Activated CD8-positive, alpha-beta memory T cell treated with anti-CD3 and anti-CD28 coated beads, Interleukin-2, amount 10 ng/mL, durations not matched to agents 7 days and 5 days (primary cell): ENCODE measurements at regions of chr4 and their contacts with region 1.

Region 1: DNA sequence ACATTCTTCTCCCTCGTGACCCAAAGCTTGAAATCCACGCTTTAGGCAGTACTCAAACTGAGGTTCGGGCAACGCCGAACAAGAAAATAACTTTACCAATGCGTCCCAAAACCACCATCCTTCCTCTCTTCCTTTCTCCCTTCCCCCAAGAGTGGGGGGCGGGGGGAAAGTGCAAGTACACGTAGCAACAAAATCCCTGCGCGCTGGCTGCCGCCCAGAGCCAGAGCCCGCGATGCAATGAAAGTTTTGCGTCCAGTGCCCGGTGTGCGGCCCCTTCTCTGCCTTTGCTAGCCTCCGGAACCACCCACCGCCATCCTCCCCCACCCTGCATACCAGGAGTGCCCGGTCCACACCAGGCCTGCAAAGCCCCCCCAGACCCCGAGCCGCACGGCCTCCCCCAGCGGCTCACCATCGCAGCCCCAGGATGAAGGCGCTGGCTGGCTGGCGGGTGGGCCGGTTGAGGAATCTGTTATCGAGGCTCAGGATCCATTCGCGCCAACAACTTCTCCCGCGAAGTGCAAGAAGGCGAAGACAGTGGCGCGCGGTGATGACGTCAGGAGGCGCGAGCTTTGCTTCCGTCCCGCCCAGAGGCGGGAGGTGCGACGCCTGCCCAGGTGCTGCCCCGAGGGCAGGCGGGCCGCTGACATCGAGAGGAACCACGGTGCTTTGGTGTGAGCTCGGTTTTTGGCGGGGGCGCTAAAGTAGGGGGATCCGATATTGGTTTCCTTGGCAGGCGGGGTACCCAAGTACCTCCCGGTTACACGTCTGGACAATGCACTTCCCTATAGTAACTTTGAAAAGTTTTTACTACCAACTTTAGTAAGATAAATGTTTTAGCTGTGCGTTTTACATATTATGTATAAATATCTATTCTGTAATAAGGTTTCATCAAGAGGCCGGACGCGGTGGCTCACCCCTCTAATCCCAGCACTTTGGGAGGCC is at the start of gene RFC1:
- DNase-seq: peak; percentile 96
- ATAC-seq: peak; percentile 93
- H3K4me3 Mint-ChIP-seq: peak within 1 kb of the TSS; percentile 94
- H3K27ac Mint-ChIP-seq: peak within 1 kb of the TSS; percentile 97
- H3K4me1 Mint-ChIP-seq: peaks cover 25% of the 10 kb centered on the region
- H3K27me3 Mint-ChIP-seq: no peaks in the 10 kb centered on the region
- total RNA-seq, gene RFC1: 72.1 to 94.7 TPM

Region 2: DNA sequence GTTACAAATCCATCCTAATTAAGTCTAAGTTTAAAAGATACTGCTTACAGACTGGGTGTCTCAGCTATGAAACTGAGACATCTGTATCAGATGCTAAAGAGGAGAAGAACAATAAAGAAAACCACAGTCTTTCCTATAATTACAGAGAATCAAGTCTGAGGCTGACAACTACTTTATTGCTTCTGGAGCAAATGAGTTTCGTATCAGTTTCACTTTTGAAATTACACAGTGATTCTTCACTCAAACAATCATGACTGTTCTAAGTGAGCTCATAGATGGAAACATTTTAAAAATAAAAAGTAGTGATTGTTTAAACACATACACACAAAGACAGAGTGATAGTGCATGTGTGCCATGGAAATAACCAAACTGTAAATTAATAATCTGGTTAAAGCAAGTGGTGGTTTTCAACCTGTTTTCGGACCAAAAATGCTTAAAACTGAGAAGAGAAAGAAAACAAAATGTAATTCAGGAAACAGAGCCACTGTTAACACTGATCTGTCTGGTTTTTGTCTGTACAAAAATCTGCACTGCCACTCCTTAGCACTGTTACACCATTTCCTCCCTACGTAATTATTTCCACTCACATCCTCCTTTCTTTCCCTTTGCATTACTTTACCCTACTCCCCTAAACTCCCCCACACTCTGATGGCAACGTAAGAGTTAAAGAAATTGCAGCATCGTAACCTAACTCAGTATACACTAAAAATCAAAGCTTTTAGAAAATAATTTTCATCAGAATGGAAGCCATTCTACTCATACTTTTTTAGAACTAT is 12.4 kb before region 1 on chr4:
- CTCF ChIA-PET with region 1: interaction called, 17 read pairs
- DNase-seq: no peak
- ATAC-seq: peak; percentile 84
- H3K4me3 Mint-ChIP-seq: peak overlapping the region; percentile 83
- H3K27ac Mint-ChIP-seq: peak overlapping the region; percentile 100
- H3K4me1 Mint-ChIP-seq: peaks cover 64% of the 10 kb centered on the region
- H3K27me3 Mint-ChIP-seq: no peaks in the 10 kb centered on the region